ENCODE measurements at regions of chr12 and their contacts with region 1.

Region 1: GRCh38 chr12:13211859-13212664 is 15.5 kb downstream of the EMP1 start:
- DNase-seq: peak; percentile 58
- H3K4me3 Mint-ChIP-seq: no peak overlapping the region
- H3K27ac Mint-ChIP-seq: no peak overlapping the region
- H3K4me1 Mint-ChIP-seq: peaks cover 26% of the 10 kb centered on the region
- H3K27me3 Mint-ChIP-seq: peaks cover 1% of the 10 kb centered on the region

Region 2: GRCh38 chr12:13094347-13094746 is 117.7 kb before region 1 on chr12:
- intact Hi-C with region 1: loop called (anchors 1 kb)
- DNase-seq: no peak
- H3K4me3 Mint-ChIP-seq: no peak overlapping the region
- H3K27ac Mint-ChIP-seq: no peak overlapping the region
- H3K4me1 Mint-ChIP-seq: peaks cover 18% of the 10 kb centered on the region
- H3K27me3 Mint-ChIP-seq: peaks cover 8% of the 10 kb centered on the region

Region 3: GRCh38 chr12:13187399-13187798 is 24.7 kb before region 1 on chr12:
- intact Hi-C with region 1: loop called (anchors 1 kb)
- DNase-seq: no peak
- H3K4me3 Mint-ChIP-seq: no peak overlapping the region
- H3K27ac Mint-ChIP-seq: no peak overlapping the region
- H3K4me1 Mint-ChIP-seq: peaks cover 5% of the 10 kb centered on the region
- H3K27me3 Mint-ChIP-seq: peaks cover 35% of the 10 kb centered on the region